ENCODE measurements at regions of chr22 and their contacts with region 1.

Region 1: GRCh38 chr22:41403532-41404318 is 22.0 kb downstream of the TEF start:
- H3K4me3 Mint-ChIP-seq: no peak overlapping the region
- H3K27ac Mint-ChIP-seq: no peak overlapping the region
- H3K4me1 Mint-ChIP-seq: peaks cover 6% of the 10 kb centered on the region
- H3K27me3 Mint-ChIP-seq: no peaks in the 10 kb centered on the region

Region 2: DNA sequence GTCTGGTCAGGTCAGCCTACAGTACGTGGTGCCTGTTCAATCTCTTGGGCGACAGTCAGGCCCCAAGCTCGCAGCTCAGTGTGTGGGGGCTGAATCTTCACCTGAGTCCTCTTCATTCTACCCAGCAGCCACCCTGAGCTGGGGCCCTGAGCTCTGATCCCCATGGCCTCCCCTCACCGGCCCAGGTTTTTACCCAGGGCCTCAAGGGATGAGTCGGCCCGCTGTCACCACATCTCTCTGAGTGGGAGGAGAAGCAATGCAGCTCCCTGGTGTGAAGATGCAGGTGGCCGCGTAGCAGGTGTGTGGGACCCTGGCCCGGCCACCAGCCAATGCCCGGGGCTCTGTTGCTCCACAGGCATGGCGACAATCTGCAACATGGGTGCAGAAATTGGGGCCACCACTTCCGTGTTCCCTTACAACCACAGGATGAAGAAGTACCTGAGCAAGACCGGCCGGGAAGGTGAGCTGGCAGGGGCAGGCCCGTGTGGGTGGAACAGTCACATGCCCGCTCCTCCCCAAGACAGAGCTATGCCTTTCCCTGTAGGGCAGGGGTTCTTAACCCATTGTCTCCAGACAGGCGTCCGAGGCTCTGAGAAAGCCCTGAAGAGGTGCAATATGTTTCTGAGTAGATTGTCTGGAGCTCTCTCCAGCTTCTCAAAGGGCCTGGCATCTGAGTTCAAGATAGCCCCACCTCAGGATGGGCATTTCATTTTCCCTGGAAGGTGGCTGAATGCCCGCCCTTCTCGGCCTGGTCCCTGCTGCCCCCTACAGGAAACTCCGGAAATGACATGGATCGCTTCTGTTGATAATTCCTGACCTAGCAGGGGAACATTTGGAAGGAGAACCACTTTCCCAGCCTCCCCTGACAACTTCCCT is 113.7 kb after region 1 on chr22:
- intact Hi-C with region 1: loop called (anchors 2 kb)
- H3K4me3 Mint-ChIP-seq: no peak overlapping the region
- H3K27ac Mint-ChIP-seq: peak overlapping the region; percentile 48
- H3K4me1 Mint-ChIP-seq: no peaks in the 10 kb centered on the region
- H3K27me3 Mint-ChIP-seq: no peaks in the 10 kb centered on the region

Region 3: DNA sequence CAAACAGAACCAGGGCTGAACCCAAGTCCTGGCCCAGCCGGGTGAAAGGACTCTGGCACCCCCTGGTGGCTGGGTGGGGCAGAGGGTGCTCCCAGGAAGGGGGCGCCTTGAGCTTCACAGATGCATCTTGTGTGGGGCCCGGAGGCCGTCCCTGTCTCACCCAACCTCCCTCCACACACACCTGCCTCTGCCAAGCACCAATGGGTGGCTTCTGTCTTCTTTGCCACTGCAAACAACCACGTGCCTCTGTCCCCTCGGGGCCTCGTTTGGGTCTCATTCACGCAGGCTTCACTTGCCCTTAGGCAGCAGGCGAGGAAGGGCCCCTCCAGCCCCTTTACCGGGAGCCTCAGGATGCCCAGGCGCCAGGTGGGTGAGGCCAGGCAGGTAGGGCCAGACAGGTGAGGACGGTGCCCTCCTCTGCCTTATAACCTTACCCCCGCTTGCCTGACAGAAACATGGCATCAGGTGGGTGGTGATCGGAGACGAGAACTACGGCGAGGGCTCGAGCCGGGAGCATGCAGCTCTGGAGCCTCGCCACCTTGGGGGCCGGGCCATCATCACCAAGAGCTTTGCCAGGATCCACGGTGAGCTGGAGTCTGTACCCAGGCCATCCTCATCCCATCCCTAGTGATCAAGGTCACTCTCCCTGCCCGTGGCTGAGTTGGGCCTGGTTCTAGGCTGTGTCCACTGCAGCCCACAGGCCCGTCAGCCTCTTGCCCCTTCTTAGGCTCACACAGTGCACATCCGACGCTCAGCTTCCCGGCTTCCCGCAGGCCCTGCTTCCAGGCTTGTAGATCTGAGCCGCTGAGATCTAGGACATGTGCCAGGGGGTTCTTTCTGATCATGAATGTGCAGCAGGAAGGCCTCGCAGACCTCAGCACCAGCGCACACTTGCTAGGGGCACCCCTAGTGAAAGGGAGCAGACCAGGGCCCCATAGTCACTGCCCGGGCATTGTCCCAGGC is 123.4 kb after region 1 on chr22:
- intact Hi-C with region 1: loop called (anchors 2 kb)
- H3K4me3 Mint-ChIP-seq: no peak overlapping the region
- H3K27ac Mint-ChIP-seq: no peak overlapping the region
- H3K4me1 Mint-ChIP-seq: peaks cover 28% of the 10 kb centered on the region
- H3K27me3 Mint-ChIP-seq: no peaks in the 10 kb centered on the region